HepG2 (cell line): ENCODE measurements at regions of chr1 and their contacts with region 1.

Region 1: GRCh38 chr1:93345633-93346420 is at the start of gene DR1:
- DNase-seq: peak; percentile 85
- ATAC-seq: peak; percentile 94
- H3K4me3 ChIP-seq: peak within 1 kb of the TSS; percentile 81 to 99 (median 93)
- H3K27ac ChIP-seq: peak within 1 kb of the TSS; percentile 94
- H3K4me1 ChIP-seq: peaks cover 35% of the 10 kb centered on the region
- H3K27me3 ChIP-seq: no peaks in the 10 kb centered on the region; a peak in 1 of 5 replicates
- CTCF ChIP-seq: no peak; the same call in 1 of the 2 replicates
- EP300 ChIP-seq: peak in 1 of 2 experiments; percentile 70; a peak in 2 of 4 replicates
- POLR2A ChIP-seq: peak; percentile 89 to 92
- RAD21 ChIP-seq: peak; percentile 45; the same call in 1 of the 2 replicates
- total RNA-seq, gene DR1: 42.3 and 54.7 TPM in 2 replicates

Region 2: GRCh38 chr1:93179886-93180722 is 165.7 kb before region 1 on chr1 and contains the start of gene TMED5:
- CTCF ChIA-PET with region 1: no interaction called
- POLR2A ChIA-PET with region 1: no interaction called
- in situ Hi-C with region 1: no loop called
- intact Hi-C with region 1: loop called (anchors 1 kb)
- DNase-seq: peak; percentile 95
- ATAC-seq: peak; percentile 97
- H3K4me3 ChIP-seq: peak within 1 kb of the TSS; percentile 85 to 100 (median 97)
- H3K27ac ChIP-seq: peak within 1 kb of the TSS; percentile 95
- H3K4me1 ChIP-seq: peaks cover 45% of the 10 kb centered on the region
- H3K27me3 ChIP-seq: no peaks in the 10 kb centered on the region; a peak in 1 of 5 replicates
- CTCF ChIP-seq: peak; percentile 24
- EP300 ChIP-seq: no peak
- POLR2A ChIP-seq: peak; percentile 79 to 86
- RAD21 ChIP-seq: 0 out of 2 replicates have a peak, but pooled peaks have one; percentile 4
- total RNA-seq, gene TMED5: 69.5 and 99.0 TPM in 2 replicates

Region 3: DNA sequence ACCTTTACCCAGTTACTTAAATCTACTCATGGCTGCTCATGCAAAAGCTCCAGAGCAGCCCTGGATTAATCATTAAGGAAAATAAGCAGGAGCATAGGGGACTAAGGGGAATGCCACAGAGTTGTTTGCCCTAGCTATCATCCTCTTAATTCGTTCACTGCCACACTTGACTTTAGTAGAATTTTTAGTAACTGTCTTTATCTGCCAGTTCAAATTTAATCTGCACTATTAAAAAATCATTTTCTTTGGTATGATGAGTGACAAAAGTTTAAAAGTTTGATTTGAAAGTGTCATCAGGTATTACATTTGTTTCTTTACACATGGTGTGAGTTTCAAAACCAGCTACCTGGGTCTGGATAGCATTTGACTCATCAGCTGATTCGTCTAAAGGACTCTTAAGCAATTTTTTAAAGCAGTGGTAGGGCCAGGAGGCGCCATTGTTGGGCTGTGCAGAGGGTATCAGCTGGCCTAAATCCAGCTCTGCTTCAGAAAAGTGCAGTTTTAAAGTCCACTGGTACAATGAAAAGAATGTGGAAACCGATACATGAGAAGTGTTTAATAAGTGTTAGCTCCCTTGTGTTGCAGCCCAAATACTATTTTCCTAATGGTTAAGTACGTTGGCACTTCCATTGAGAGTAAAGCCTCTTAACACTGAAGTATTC is 70.1 kb before region 1 on chr1:
- CTCF ChIA-PET with region 1: no interaction called
- POLR2A ChIA-PET with region 1: interaction called, 13 read pairs
- in situ Hi-C with region 1: no loop called
- intact Hi-C with region 1: no loop called
- DNase-seq: peak; percentile 86
- ATAC-seq: peak; percentile 99
- H3K4me3 ChIP-seq: peak overlapping the region; percentile 22 to 56 (median 46); a peak in 5 of 6 replicates
- H3K27ac ChIP-seq: peak overlapping the region; percentile 94
- H3K4me1 ChIP-seq: peaks cover 37% of the 10 kb centered on the region
- H3K27me3 ChIP-seq: no peaks in the 10 kb centered on the region
- CTCF ChIP-seq: no peak
- EP300 ChIP-seq: peak in 1 of 2 experiments; percentile 34; a peak in 1 of 4 replicates
- POLR2A ChIP-seq: no peak
- RAD21 ChIP-seq: no peak

Region 4: DNA sequence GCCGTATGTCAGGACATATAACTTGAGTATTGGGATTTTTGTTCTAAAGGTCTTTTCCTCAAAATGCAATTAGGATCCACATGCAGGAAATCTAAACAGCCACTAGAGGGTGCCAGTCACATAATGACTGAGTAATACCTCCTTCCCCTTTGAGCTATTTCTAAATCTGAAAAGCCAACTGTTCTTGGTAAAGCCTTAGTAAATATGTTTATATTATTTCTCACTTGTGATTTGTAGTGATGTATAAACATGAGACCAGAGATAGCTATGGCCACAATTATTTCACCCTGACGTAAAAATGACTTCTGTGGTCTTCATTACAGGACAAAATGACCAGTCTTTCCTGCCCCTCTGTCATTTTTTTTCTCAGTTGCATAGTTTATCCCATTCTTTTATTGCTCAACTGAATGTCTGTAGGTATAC is 41.1 kb before region 1 on chr1:
- CTCF ChIA-PET with region 1: no interaction called
- POLR2A ChIA-PET with region 1: interaction called, 6 read pairs
- in situ Hi-C with region 1: loop called (anchors 5 kb)
- intact Hi-C with region 1: loop called (anchors 2 kb)
- DNase-seq: peak; percentile 65
- ATAC-seq: no peak
- H3K4me3 ChIP-seq: no peak overlapping the region
- H3K27ac ChIP-seq: no peak overlapping the region
- H3K4me1 ChIP-seq: no peaks in the 10 kb centered on the region
- H3K27me3 ChIP-seq: no peaks in the 10 kb centered on the region
- CTCF ChIP-seq: peak; percentile 83
- EP300 ChIP-seq: no peak
- POLR2A ChIP-seq: no peak
- RAD21 ChIP-seq: peak; percentile 85